Heart left ventricle (tissue), 16 donors: ENCODE measurements at regions of chr2 and their contacts with region 1.

Region 1: GRCh38 chr2:38740851-38741731 is 10.1 kb downstream of the SRSF7 start:
- DNase-seq: no peak
- ATAC-seq: peak in 2 of 4 donors; percentile 17 to 59
- H3K4me3 ChIP-seq: peak overlapping the region in 2 of 12 donors; percentile 13 to 20
- H3K27ac ChIP-seq: peak overlapping the region in 6 of 12 donors; percentile 3 to 75 (median 16)
- H3K4me1 ChIP-seq: peaks cover 0 to 48% (median 9%) of the 10 kb centered on the region in 12 donors
- H3K27me3 ChIP-seq: no peaks in the 10 kb centered on the region
- CTCF ChIP-seq: peak; percentile 52 to 83 (median 68)
- POLR2A ChIP-seq: no peak

Region 2: DNA sequence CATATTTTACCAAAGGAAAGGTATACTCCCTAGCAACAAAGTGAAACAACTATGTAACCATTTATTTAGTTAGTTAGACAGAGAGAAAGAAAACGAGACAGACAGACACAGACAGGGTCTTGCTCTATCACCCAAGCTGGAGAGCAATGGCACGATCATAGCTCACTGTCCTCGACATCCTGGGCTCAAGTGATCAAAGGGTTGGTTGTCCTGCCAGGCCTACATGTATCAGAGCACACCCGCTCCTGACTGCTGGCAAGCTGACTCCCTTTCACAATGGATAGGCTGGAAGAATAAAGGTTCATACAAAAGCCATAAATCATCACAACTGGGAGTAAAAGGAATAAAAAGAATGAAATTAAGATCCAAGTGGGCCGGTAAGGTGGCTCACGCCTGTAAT is 417.5 kb before region 1 on chr2:
- intact Hi-C with region 1: loop called in 8 of 10 experiments (anchors 5 to 10 kb)
- DNase-seq: no peak
- ATAC-seq: no peak
- H3K4me3 ChIP-seq: no peak overlapping the region
- H3K27ac ChIP-seq: no peak overlapping the region
- H3K4me1 ChIP-seq: peaks cover 0 to 23% (median 11%) of the 10 kb centered on the region in 12 donors
- H3K27me3 ChIP-seq: no peaks in the 10 kb centered on the region
- CTCF ChIP-seq: no peak
- POLR2A ChIP-seq: no peak

Region 3: DNA sequence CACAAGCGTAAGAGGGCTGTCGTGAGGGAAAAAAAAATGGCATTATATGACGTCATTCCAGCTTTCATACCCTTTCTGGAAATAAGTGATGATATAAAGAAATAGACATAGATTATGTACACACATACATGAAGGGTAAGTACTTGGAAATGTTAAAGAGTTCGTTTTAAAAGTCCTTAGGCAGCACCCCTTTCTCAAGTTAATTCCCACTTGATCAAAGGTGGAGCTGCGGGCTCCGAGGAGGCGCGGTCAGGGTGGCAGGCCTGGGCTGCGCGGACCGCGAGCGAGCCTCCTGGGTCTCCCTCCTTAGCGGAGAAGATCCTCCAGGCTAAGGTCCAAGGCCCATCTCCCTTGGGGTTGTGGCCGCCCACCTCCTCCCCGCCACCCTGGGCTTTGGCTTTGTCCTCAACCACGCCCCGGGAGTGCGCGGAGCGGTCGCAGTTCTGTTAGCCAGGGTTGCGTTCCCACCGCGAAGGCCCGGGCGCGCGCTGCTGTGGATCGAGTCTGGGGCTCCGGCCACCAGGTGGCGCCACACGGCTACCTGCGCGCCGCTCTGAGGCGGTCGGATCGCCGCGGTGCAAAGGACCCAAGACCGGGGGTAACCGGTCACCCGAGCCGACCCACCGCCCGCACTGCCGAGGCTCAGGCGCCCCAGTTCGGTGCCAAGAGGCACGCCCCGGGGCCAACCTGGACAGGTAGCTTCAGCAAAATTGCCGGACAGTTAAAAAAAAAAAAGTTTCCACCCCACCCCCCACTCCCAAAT is 205.2 kb before region 1 on chr2:
- intact Hi-C with region 1: loop called in 5 of 10 experiments (anchors 5 kb)
- DNase-seq: peak; percentile 78 to 93 (median 84)
- ATAC-seq: peak; percentile 91 to 96 (median 94)
- H3K4me3 ChIP-seq: peak overlapping the region in 11 of 12 donors; percentile 28 to 67 (median 51)
- H3K27ac ChIP-seq: peak overlapping the region in 1 of 12 donors; percentile 84
- H3K4me1 ChIP-seq: peaks cover 0 to 11% (median 0%) of the 10 kb centered on the region in 12 donors
- H3K27me3 ChIP-seq: no peaks in the 10 kb centered on the region
- CTCF ChIP-seq: peak; percentile 82 to 97 (median 92)
- POLR2A ChIP-seq: no peak

Region 4: DNA sequence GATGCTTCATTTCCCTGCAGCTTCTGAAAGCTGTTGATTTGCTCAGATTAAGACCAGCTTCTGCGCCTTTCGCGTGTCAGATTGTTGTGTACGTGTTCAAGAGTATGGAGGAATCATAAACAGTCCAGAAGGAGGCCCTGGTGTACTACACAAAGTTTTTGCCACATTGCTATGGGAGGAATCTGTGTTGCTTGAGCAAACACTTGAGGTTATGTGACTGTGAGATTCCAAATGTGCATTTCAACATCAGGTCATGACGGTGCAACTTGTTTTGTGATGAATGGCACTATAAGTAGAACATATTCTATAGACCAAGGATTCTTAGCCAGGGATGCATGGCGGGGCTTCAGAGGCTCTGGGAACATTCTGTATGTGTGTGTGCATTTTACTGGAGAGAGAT is 24.9 kb before region 1 on chr2:
- intact Hi-C with region 1: no loop called
- DNase-seq: no peak
- ATAC-seq: no peak
- H3K4me3 ChIP-seq: no peak overlapping the region
- H3K27ac ChIP-seq: no peak overlapping the region
- H3K4me1 ChIP-seq: peaks cover 0 to 26% (median 10%) of the 10 kb centered on the region in 12 donors
- H3K27me3 ChIP-seq: no peaks in the 10 kb centered on the region
- CTCF ChIP-seq: no peak
- POLR2A ChIP-seq: no peak

Region 5: GRCh38 chr2:38728694-38729093 is 12.4 kb before region 1 on chr2:
- intact Hi-C with region 1: loop called in 3 of 10 experiments (anchors 1 to 2 kb)
- DNase-seq: no peak
- ATAC-seq: no peak
- H3K4me3 ChIP-seq: no peak overlapping the region
- H3K27ac ChIP-seq: no peak overlapping the region
- H3K4me1 ChIP-seq: peaks cover 0 to 13% (median 0%) of the 10 kb centered on the region in 12 donors
- H3K27me3 ChIP-seq: no peaks in the 10 kb centered on the region
- CTCF ChIP-seq: no peak
- POLR2A ChIP-seq: no peak